ENCODE measurements at regions of chr19 and their contacts with region 1.

Region 1: GRCh38 chr19:5790573-5791520 is at the start of gene DUS3L:
- DNase-seq: peak; percentile 91 to 98 (median 94)
- ATAC-seq: peak; percentile 95
- H3K4me3 ChIP-seq: peak within 1 kb of the TSS; percentile 86 to 91
- H3K4me3 Mint-ChIP-seq: peak within 1 kb of the TSS; percentile 97
- H3K27ac ChIP-seq: peak within 1 kb of the TSS; percentile 94 to 97
- H3K27ac Mint-ChIP-seq: peak within 1 kb of the TSS; percentile 99
- H3K4me1 ChIP-seq: peaks cover 7% of the 10 kb centered on the region
- H3K4me1 Mint-ChIP-seq: peaks cover 17% of the 10 kb centered on the region
- H3K27me3 ChIP-seq: no peaks in the 10 kb centered on the region
- H3K27me3 Mint-ChIP-seq: peaks cover 2% of the 10 kb centered on the region
- CTCF ChIP-seq: no peak
- total RNA-seq, gene DUS3L: 174 to 192 TPM

Region 2: GRCh38 chr19:5622463-5623396 is 168.1 kb before region 1 on chr19 and contains the starts of genes SAFB and SAFB2:
- CTCF ChIA-PET with region 1: no interaction called
- POLR2A ChIA-PET with region 1: interaction called, 3 read pairs
- intact Hi-C with region 1: loop called (anchors 1 to 2 kb)
- DNase-seq: peak; percentile 99 to 100 (median 99)
- ATAC-seq: peak; percentile 87
- H3K4me3 ChIP-seq: peak within 1 kb of the TSS; percentile 91 to 93
- H3K4me3 Mint-ChIP-seq: peak within 1 kb of the TSS; percentile 100
- H3K27ac ChIP-seq: peak within 1 kb of the TSS; percentile 90 to 94
- H3K27ac Mint-ChIP-seq: peak within 1 kb of the TSS; percentile 99
- H3K4me1 ChIP-seq: peaks cover 77% of the 10 kb centered on the region
- H3K4me1 Mint-ChIP-seq: peaks cover 69% of the 10 kb centered on the region
- H3K27me3 ChIP-seq: no peaks in the 10 kb centered on the region
- H3K27me3 Mint-ChIP-seq: no peaks in the 10 kb centered on the region
- CTCF ChIP-seq: no peak
- total RNA-seq, gene SAFB: 190 to 191 TPM
- total RNA-seq, gene SAFB2: 293 to 302 TPM

Region 3: DNA sequence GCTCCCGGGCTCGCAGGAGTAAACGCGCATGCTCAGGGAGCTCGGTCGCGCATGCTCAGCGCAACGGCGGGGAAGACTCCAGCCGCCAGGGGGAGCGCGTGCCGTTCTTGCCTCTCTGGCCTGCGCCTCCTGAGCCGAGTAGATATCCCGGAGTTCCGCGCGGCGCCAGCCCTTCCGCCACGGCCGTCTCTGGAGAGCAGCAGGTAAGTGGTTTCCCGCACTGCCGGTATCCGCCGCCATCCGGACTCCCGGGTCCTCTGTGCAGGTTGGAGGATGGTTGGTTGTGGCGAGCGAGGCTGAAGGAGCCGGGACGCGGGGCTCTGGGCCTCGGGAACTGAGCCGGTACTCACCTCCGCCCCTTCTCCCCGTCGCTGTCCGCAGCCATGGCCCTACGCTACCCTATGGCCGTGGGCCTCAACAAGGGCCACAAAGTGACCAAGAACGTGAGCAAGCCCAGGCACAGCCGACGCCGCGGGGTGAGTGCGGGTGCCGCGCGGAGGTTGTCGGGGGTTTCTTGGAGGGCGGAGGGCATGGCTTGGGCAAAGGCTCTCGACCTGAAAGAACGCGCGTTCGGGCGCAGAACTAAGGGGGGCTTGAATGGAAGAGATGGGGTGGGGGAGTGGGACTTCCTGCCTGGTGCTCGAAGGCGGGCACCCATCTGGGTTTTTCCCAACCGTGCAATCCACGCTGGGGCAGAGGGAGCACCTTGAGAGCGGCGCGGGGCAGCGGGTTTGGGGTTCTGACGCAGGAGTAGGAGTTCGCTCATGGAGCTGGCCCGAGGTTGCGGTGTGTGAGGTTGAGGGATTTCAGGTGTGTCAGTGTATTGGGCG is 100.5 kb before region 1 on chr19 and contains the start of gene RPL36:
- CTCF ChIA-PET with region 1: no interaction called
- POLR2A ChIA-PET with region 1: no interaction called
- intact Hi-C with region 1: loop called in 1 of 2 experiments (anchors 1 kb)
- DNase-seq: peak; percentile 95 to 100 (median 99)
- ATAC-seq: peak; percentile 63
- H3K4me3 ChIP-seq: peak within 1 kb of the TSS; percentile 84 to 96
- H3K4me3 Mint-ChIP-seq: peak within 1 kb of the TSS; percentile 91
- H3K27ac ChIP-seq: peak within 1 kb of the TSS; percentile 86 to 89
- H3K27ac Mint-ChIP-seq: peak within 1 kb of the TSS; percentile 93
- H3K4me1 ChIP-seq: peaks cover 26% of the 10 kb centered on the region
- H3K4me1 Mint-ChIP-seq: peaks cover 48% of the 10 kb centered on the region
- H3K27me3 ChIP-seq: no peaks in the 10 kb centered on the region
- H3K27me3 Mint-ChIP-seq: no peaks in the 10 kb centered on the region
- CTCF ChIP-seq: peak; percentile 96
- total RNA-seq, gene RPL36: 1,425 to 1,465 TPM

Region 4: GRCh38 chr19:5803752-5804515 is 13.1 kb after region 1 on chr19:
- CTCF ChIA-PET with region 1: interaction called, 15 read pairs
- POLR2A ChIA-PET with region 1: interaction called, 5 read pairs
- intact Hi-C with region 1: loop called (anchors 1 kb)
- DNase-seq: peak; percentile 80 to 96 (median 92)
- ATAC-seq: peak; percentile 97
- H3K4me3 ChIP-seq: peak overlapping the region; percentile 41 to 61
- H3K4me3 Mint-ChIP-seq: peak overlapping the region; percentile 75
- H3K27ac ChIP-seq: no peak overlapping the region
- H3K27ac Mint-ChIP-seq: no peak overlapping the region
- H3K4me1 ChIP-seq: peaks cover 34% of the 10 kb centered on the region
- H3K4me1 Mint-ChIP-seq: peaks cover 23% of the 10 kb centered on the region
- H3K27me3 ChIP-seq: peaks cover 0 to 35% of the 10 kb centered on the region in 2 experiments
- H3K27me3 Mint-ChIP-seq: peaks cover 18% of the 10 kb centered on the region
- CTCF ChIP-seq: peak; percentile 93

Region 5: DNA sequence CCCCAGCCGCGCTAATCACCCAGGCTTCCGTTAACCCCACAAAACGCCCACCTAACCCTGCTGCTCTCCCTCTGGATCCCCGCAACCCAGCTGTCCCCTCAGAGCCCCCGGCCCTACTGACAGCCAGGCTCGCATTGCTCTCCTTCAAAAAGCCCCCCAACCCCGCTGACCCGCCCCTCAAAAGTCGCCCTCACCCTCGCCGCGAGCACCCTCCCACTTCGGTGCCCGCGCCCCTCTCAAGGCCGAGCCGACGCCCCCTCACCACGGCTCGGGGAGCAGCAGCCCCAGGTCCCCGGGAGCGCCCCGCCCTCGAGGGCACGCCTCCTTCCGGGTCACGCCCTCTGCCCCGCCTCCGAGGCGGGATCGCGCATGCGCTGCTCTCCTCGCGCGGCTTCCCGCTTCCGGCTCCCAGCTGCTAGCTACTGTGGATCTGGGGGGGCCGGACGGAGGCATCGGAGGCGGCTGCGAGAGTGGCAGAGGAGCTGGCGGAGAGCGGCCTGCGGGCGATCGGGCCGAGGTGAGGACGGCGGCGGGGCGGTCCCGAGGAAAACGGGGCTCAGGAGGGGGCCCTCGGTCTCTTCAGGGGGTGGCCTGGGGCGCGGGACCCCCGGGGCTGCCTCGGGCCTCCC is 1604.0 kb after region 1 on chr19:
- CTCF ChIA-PET with region 1: no interaction called
- POLR2A ChIA-PET with region 1: no interaction called
- intact Hi-C with region 1: loop called in 1 of 2 experiments (anchors 5 kb)
- DNase-seq: peak; percentile 79 to 97 (median 89)
- ATAC-seq: peak; percentile 90
- H3K4me3 ChIP-seq: peak overlapping the region; percentile 39 to 65
- H3K4me3 Mint-ChIP-seq: peak overlapping the region; percentile 86
- H3K27ac ChIP-seq: peak overlapping the region; percentile 12 to 72
- H3K27ac Mint-ChIP-seq: peak overlapping the region; percentile 87
- H3K4me1 ChIP-seq: peaks cover 26% of the 10 kb centered on the region
- H3K4me1 Mint-ChIP-seq: peaks cover 41% of the 10 kb centered on the region
- H3K27me3 ChIP-seq: no peaks in the 10 kb centered on the region
- H3K27me3 Mint-ChIP-seq: no peaks in the 10 kb centered on the region
- CTCF ChIP-seq: no peak

Measured in CD8-positive, alpha-beta T cell (primary cell).